Head of caudate nucleus (tissue), 42 donors: ENCODE measurements at regions of chr11 and their contacts with region 1.

Region 1: DNA sequence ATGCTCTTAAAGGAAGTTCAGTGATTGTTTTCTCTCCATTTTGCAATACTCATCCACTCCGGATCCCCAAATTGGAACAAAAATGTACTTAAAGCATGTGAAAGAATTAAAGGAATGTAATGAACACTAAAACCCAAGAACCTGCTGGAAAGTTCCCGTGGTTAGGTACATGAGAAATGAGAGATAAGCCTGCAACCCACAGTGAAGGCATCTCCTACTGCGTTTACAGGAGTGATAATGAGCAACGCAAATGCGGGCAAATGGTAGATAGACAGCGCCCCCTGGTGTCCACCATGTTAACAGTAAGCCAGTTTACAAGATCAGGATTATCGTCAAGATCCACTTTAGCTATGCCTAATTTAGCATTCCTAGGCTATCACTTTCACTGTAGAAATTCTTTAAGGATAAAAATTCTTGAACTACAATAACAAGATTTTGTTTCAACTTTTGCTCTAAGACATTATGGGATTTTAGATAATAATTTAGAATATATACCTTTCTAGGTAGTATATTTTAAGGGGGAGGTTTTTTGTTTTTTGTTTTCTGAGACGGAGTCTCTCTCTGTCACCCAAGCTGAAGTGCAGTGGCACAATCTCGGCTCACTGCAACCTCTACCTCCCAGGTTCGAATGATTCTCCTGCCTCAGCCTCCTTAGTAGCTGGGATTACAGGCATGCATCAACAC is 29.9 kb downstream of the ALG9 start:
- DNase-seq: peak; percentile 79 to 99 (median 94)

Region 2: GRCh38 chr11:111454561-111455192 is 386.8 kb before region 1 on chr11:
- intact Hi-C with region 1: loop called (anchors 10 kb)
- DNase-seq: peak; percentile 59 to 92 (median 80)

Region 3: GRCh38 chr11:111565114-111565720 is 276.3 kb before region 1 on chr11:
- intact Hi-C with region 1: loop called (anchors 10 kb)
- DNase-seq: peak; percentile 12 to 91 (median 76)

Region 4: GRCh38 chr11:111601979-111602864 is 239.3 kb before region 1 on chr11 and contains the start of gene SIK2:
- intact Hi-C with region 1: loop called (anchors 2 kb)
- DNase-seq: peak; percentile 87 to 98 (median 95)

Region 5: GRCh38 chr11:111777094-111778046 is 64.1 kb before region 1 on chr11:
- intact Hi-C with region 1: loop called (anchors 10 kb)
- DNase-seq: peak in 23 of 42 donors; percentile 26 to 81 (median 51)

Region 6: GRCh38 chr11:111926505-111927391 is 85.2 kb after region 1 on chr11:
- intact Hi-C with region 1: no loop called
- DNase-seq: peak; percentile 91 to 99 (median 98)

Region 7: GRCh38 chr11:111960916-111961315 is 119.4 kb after region 1 on chr11:
- intact Hi-C with region 1: no loop called
- DNase-seq: no peak